CD14-positive monocyte (primary cell): ENCODE measurements at regions of chr9 and their contacts with region 1.

Region 1: GRCh38 chr9:2241836-2242741 is 226.9 kb downstream of the SMARCA2 start:
- DNase-seq: peak; percentile 57 to 70 (median 67)
- H3K4me3 ChIP-seq: peak overlapping the region; percentile 72 to 88 (median 75)
- H3K4me3 Mint-ChIP-seq: peak overlapping the region; percentile 91 to 97
- H3K27ac ChIP-seq: peak overlapping the region; percentile 23 to 74
- H3K27ac Mint-ChIP-seq: peak overlapping the region; percentile 58 to 93 (median 84)
- H3K4me1 ChIP-seq: peaks cover 25 to 29% of the 10 kb centered on the region in 2 donors
- H3K4me1 Mint-ChIP-seq: peaks cover 31% of the 10 kb centered on the region
- H3K27me3 ChIP-seq: no peaks in the 10 kb centered on the region
- H3K27me3 Mint-ChIP-seq: peaks cover 6 to 9% (median 7%) of the 10 kb centered on the region in 3 donors
- CTCF ChIP-seq: no peak

Region 2: GRCh38 chr9:1747417-1747967 is 494.6 kb before region 1 on chr9:
- intact Hi-C with region 1: no loop called
- DNase-seq: no peak
- H3K4me3 ChIP-seq: no peak overlapping the region
- H3K4me3 Mint-ChIP-seq: no peak overlapping the region
- H3K27ac ChIP-seq: no peak overlapping the region
- H3K27ac Mint-ChIP-seq: no peak overlapping the region
- H3K4me1 ChIP-seq: no peaks in the 10 kb centered on the region
- H3K4me1 Mint-ChIP-seq: no peaks in the 10 kb centered on the region
- H3K27me3 ChIP-seq: no peaks in the 10 kb centered on the region
- H3K27me3 Mint-ChIP-seq: peaks cover 0 to 2% (median 0%) of the 10 kb centered on the region in 3 donors
- CTCF ChIP-seq: no peak

Region 3: DNA sequence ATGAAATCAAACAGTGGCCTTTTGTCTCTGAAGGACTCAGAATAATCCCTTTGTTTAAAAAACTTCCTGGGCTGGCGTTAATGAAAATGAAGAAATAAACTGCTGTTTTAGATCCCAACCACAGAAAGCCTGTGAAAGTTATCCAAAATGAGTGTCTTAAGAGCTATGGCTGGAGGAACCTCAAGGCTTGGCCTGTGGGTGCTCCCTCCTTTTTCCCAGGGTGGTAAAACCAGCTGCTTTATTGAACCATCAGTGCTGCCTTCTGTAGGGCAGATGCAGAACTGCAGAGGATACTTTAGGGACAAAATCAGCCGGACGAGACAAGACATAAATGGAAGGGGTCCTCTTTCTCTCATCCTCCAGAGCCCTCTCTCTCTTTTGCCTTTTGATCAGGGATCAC is 126.0 kb before region 1 on chr9:
- intact Hi-C with region 1: no loop called
- DNase-seq: no peak
- H3K4me3 ChIP-seq: no peak overlapping the region
- H3K4me3 Mint-ChIP-seq: no peak overlapping the region
- H3K27ac ChIP-seq: no peak overlapping the region
- H3K27ac Mint-ChIP-seq: no peak overlapping the region
- H3K4me1 ChIP-seq: no peaks in the 10 kb centered on the region
- H3K4me1 Mint-ChIP-seq: no peaks in the 10 kb centered on the region
- H3K27me3 ChIP-seq: no peaks in the 10 kb centered on the region
- H3K27me3 Mint-ChIP-seq: no peaks in the 10 kb centered on the region
- CTCF ChIP-seq: peak; percentile 39

Region 4: DNA sequence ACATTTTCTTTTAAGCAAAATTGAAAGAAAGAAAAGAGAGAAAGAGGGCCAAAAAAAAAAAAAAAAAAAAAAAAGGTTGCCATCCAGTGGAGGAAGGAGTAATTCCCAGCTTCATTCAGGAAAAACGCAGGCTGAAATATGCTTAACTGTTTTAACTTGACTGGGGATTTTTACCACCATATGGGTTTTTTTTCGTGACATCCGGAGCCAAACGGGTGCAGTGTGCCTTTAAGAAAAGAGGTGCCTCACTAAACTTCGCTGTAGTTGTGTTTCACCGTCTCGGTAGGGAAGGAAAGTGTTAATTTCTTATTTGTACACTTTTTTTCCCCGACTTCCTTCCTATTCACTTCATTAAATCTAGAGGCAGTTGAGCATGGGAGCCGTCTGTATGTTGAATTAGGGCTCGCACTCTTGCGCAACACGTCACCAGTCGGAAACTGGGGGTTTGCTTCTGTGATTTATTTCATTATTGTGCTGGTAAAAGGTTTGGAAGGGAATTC is 83.9 kb before region 1 on chr9:
- intact Hi-C with region 1: loop called in 1 of 2 experiments (anchors 10 kb)
- DNase-seq: peak; percentile 47 to 66 (median 57)
- H3K4me3 ChIP-seq: peak overlapping the region; percentile 39 to 77 (median 67)
- H3K4me3 Mint-ChIP-seq: peak overlapping the region; percentile 78 to 91
- H3K27ac ChIP-seq: peak overlapping the region; percentile 9 to 82
- H3K27ac Mint-ChIP-seq: peak overlapping the region; percentile 70 to 90 (median 87)
- H3K4me1 ChIP-seq: peaks cover 48 to 79% of the 10 kb centered on the region in 2 donors
- H3K4me1 Mint-ChIP-seq: peaks cover 74% of the 10 kb centered on the region
- H3K27me3 ChIP-seq: no peaks in the 10 kb centered on the region
- H3K27me3 Mint-ChIP-seq: no peaks in the 10 kb centered on the region
- CTCF ChIP-seq: no peak

Region 5: DNA sequence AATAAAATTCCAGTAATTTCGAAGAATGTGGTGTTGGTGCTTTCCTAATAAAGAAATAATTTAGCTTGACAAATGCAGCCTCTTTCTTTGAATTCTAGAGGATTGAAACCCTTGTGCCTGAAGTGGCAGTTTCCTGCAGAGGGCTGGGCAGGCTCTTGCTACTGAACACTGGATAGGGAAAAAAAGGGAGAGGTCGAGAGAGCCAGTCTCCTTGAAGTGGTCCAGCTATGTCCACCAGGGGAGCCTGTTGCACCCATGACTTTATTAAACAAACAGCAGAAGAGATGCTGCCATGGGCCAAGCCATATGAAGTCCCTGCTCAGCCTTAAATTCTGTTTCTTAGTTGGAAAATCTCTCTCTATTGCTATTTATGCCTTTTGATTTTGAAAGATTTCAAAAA is 48.5 kb before region 1 on chr9:
- intact Hi-C with region 1: no loop called
- DNase-seq: no peak
- H3K4me3 ChIP-seq: no peak overlapping the region
- H3K4me3 Mint-ChIP-seq: no peak overlapping the region
- H3K27ac ChIP-seq: no peak overlapping the region
- H3K27ac Mint-ChIP-seq: peak overlapping the region in 2 of 7 donors; percentile 16 to 40
- H3K4me1 ChIP-seq: no peaks in the 10 kb centered on the region
- H3K4me1 Mint-ChIP-seq: no peaks in the 10 kb centered on the region
- H3K27me3 ChIP-seq: no peaks in the 10 kb centered on the region
- H3K27me3 Mint-ChIP-seq: no peaks in the 10 kb centered on the region
- CTCF ChIP-seq: no peak

Region 6: GRCh38 chr9:2281031-2281802 is 39.1 kb after region 1 on chr9:
- intact Hi-C with region 1: no loop called
- DNase-seq: no peak
- H3K4me3 ChIP-seq: no peak overlapping the region
- H3K4me3 Mint-ChIP-seq: no peak overlapping the region
- H3K27ac ChIP-seq: no peak overlapping the region
- H3K27ac Mint-ChIP-seq: no peak overlapping the region
- H3K4me1 ChIP-seq: no peaks in the 10 kb centered on the region
- H3K4me1 Mint-ChIP-seq: no peaks in the 10 kb centered on the region
- H3K27me3 ChIP-seq: no peaks in the 10 kb centered on the region
- H3K27me3 Mint-ChIP-seq: peaks cover 0 to 3% (median 0%) of the 10 kb centered on the region in 3 donors
- CTCF ChIP-seq: no peak